MCF 10A (cell line): ENCODE measurements at regions of chr11 and their contacts with region 1.

Region 1: DNA sequence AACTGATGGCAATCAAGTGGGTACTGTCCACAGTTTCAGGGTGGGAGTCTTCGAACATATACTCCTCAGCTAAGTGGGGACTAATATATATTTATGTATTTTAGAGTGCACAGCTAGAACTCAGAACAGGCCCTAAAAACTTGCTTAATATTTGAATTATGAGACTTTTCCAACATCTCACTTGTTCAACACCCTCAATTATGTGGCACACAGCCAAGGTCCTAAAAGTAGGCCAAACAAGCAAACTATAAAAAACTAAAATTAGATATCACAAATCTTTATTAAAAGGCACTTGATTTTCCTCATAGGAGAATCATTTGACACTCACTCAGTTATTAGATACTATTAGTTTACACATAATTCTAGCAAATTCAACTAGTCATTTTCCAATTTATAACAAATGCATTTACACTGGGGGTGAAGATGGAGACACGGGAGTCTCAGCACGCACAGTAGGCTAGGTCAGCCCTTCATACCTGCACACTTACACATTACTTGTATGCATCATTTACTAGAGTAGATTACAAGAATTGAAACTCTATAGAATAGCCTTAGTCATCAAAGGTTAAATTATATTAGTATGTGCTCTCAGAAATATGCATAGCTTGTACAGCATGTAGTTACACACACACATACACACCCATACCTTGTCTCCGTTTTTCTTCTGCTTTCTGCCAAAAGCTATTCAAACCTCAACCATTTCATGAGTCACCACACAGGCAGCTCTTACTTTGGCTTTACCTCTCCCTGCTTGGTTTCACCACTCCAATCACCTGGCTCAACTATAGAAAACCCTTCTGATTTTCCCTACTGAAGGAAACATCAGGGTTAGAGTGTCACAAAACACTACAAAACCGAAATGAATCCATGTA is 171.5 kb downstream of the SBF2 start:
- DNase-seq: peak; percentile 92
- H3K4me3 Mint-ChIP-seq: peak overlapping the region; percentile 52
- H3K27ac Mint-ChIP-seq: peak overlapping the region; percentile 79
- H3K4me1 Mint-ChIP-seq: peaks cover 53% of the 10 kb centered on the region
- H3K27me3 Mint-ChIP-seq: no peaks in the 10 kb centered on the region
- CTCF ChIP-seq: no peak

Region 2: DNA sequence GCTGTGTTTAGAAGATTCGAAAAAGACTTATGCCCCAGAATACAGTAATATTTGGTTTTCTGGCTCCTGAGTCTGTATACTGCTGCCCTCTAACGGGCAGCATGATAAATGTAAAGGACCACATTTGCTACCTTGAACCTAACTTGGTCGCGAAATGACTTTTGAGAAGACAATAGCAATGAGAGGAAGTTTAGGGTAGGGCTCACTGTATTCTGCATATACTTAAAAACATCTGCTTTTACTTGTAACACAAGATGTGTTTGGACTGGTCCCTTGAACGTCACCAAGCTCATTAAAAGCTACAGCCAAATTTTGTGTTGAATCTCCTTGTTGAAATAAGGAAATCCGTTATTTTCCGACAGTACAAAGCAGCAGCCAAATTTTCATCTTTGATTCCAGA is 149.6 kb before region 1 on chr11:
- CTCF ChIA-PET with region 1: no interaction called
- POLR2A ChIA-PET with region 1: no interaction called
- intact Hi-C with region 1: no loop called
- DNase-seq: peak; percentile 60
- H3K4me3 Mint-ChIP-seq: no peak overlapping the region
- H3K27ac Mint-ChIP-seq: peak overlapping the region; percentile 8
- H3K4me1 Mint-ChIP-seq: peaks cover 6% of the 10 kb centered on the region
- H3K27me3 Mint-ChIP-seq: no peaks in the 10 kb centered on the region
- CTCF ChIP-seq: peak; percentile 76

Region 3: GRCh38 chr11:10139656-10140055 is 17.1 kb after region 1 on chr11:
- CTCF ChIA-PET with region 1: interaction called, 3 read pairs
- POLR2A ChIA-PET with region 1: interaction called, 27 read pairs
- intact Hi-C with region 1: no loop called
- DNase-seq: peak; percentile 75
- H3K4me3 Mint-ChIP-seq: no peak overlapping the region
- H3K27ac Mint-ChIP-seq: peak overlapping the region; percentile 82
- H3K4me1 Mint-ChIP-seq: peaks cover 11% of the 10 kb centered on the region
- H3K27me3 Mint-ChIP-seq: no peaks in the 10 kb centered on the region
- CTCF ChIP-seq: no peak